ENCODE measurements at regions of chr1 and their contacts with region 1.

Region 1: DNA sequence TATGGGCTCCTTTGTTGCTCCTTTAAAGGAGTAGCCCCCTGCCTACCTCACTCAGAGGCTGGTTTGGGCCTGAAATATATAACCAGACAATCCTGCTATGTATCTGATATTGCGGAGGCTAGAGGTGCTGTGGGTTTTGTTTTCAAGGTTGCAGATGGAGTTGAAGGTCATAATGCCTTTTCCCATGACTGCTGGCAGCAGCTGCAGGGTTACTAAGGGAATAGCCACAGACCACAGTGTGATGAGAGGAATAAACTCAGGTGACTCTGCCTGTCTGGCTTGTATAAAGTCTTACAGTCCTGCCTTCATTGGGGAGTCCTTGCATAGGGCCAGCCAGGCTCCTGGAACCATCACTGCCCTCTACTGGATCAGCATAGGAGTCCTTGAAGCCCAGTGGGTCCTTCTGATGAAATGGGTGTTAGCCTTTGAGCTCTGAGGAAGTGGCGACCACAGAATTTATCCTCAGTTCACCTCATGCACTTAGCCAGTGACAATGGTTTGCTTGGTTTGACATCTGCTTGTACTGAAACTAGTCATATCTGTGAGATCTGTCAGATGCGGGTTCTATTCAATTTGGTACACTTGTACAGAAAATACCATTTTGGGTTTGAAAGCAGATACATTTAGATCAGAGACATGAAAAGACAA is 174.4 kb upstream of the HMCN1 start:
- DNase-seq: peak; percentile 92
- H3K4me3 Mint-ChIP-seq: peak overlapping the region; percentile 64
- H3K27ac Mint-ChIP-seq: peak overlapping the region; percentile 68
- H3K4me1 Mint-ChIP-seq: peaks cover 44% of the 10 kb centered on the region
- H3K27me3 Mint-ChIP-seq: no peaks in the 10 kb centered on the region

Region 2: GRCh38 chr1:184754476-184755225 is 805.2 kb before region 1 on chr1 and contains the start of gene EDEM3:
- intact Hi-C with region 1: loop called (anchors 10 kb)
- DNase-seq: peak; percentile 99
- H3K4me3 Mint-ChIP-seq: peak within 1 kb of the TSS; percentile 98
- H3K27ac Mint-ChIP-seq: peak within 1 kb of the TSS; percentile 96
- H3K4me1 Mint-ChIP-seq: peaks cover 23% of the 10 kb centered on the region
- H3K27me3 Mint-ChIP-seq: peaks cover 7% of the 10 kb centered on the region
- total RNA-seq, gene EDEM3: 23.6 and 28.3 TPM in 2 replicates

Region 3: GRCh38 chr1:185156854-185157598 is 402.8 kb before region 1 on chr1 and contains the starts of genes SWT1 and TRMT1L:
- intact Hi-C with region 1: loop called (anchors 2 kb)
- DNase-seq: peak; percentile 99
- H3K4me3 Mint-ChIP-seq: peak within 1 kb of the TSS; percentile 98
- H3K27ac Mint-ChIP-seq: peak within 1 kb of the TSS; percentile 98
- H3K4me1 Mint-ChIP-seq: peaks cover 55% of the 10 kb centered on the region
- H3K27me3 Mint-ChIP-seq: no peaks in the 10 kb centered on the region
- total RNA-seq, gene SWT1: 1.4 and 1.8 TPM in 2 replicates
- total RNA-seq, gene TRMT1L: 22.4 and 26.0 TPM in 2 replicates

Region 4: DNA sequence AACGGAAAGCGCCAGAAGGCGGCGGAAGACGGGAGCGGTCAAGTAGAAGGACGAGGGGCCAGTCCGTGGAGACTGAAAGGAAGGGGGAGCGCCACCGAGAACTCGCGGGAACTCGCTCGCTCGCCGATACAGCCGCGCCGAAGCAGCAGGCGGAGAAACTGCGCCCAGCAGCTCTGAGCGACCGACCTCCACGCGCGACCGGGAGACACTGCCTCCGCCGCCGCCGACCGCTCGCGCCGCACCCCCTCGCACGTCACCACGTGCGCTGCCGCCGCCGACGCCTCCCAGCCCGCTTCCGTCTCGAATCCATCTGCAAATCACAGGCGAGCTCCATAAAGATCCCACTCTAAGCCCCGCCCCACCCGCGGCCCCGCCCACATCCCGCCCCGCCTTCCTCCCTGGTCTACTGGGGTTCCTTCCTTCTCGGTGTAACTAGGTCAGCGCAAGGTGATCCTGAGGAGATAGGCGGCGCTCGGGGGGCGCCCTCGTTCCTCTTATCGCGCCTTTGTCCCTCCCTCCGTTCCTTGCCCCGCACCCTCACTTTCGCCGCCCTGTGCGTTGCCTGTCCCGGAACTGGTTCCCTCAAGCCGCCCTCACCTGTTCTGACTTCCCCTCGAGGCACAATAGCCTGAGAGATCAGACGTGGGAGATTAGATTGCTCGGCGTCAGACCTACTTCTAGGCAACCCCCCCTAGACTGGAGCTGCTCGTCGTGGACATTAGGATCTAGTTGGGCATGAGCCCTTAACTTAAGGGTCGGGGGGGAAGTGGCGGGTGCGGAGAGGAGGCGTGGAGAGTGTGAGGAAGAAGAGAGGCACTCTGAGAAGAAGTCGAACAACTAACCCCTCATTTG is 242.5 kb before region 1 on chr1 and contains the start of gene IVNS1ABP:
- intact Hi-C with region 1: loop called (anchors 1 kb)
- DNase-seq: peak; percentile 98
- H3K4me3 Mint-ChIP-seq: peak within 1 kb of the TSS; percentile 95
- H3K27ac Mint-ChIP-seq: peak within 1 kb of the TSS; percentile 95
- H3K4me1 Mint-ChIP-seq: peaks cover 39% of the 10 kb centered on the region
- H3K27me3 Mint-ChIP-seq: no peaks in the 10 kb centered on the region
- total RNA-seq, gene IVNS1ABP: 186 and 187 TPM in 2 replicates

Region 5: GRCh38 chr1:185420588-185421081 is 139.2 kb before region 1 on chr1:
- intact Hi-C with region 1: loop called (anchors 2 kb)
- DNase-seq: peak; percentile 86
- H3K4me3 Mint-ChIP-seq: peak overlapping the region; percentile 74
- H3K27ac Mint-ChIP-seq: peak overlapping the region; percentile 92
- H3K4me1 Mint-ChIP-seq: peaks cover 62% of the 10 kb centered on the region
- H3K27me3 Mint-ChIP-seq: no peaks in the 10 kb centered on the region

Region 6: GRCh38 chr1:185500001-185500626 is 59.7 kb before region 1 on chr1:
- intact Hi-C with region 1: loop called (anchors 2 kb)
- DNase-seq: no peak
- H3K4me3 Mint-ChIP-seq: no peak overlapping the region
- H3K27ac Mint-ChIP-seq: peak overlapping the region; percentile 73
- H3K4me1 Mint-ChIP-seq: peaks cover 22% of the 10 kb centered on the region
- H3K27me3 Mint-ChIP-seq: no peaks in the 10 kb centered on the region

Region 7: GRCh38 chr1:185681034-185681633 is 121.3 kb after region 1 on chr1:
- intact Hi-C with region 1: loop called (anchors 5 kb)
- DNase-seq: peak; percentile 80
- H3K4me3 Mint-ChIP-seq: no peak overlapping the region
- H3K27ac Mint-ChIP-seq: no peak overlapping the region
- H3K4me1 Mint-ChIP-seq: peaks cover 18% of the 10 kb centered on the region
- H3K27me3 Mint-ChIP-seq: peaks cover 3% of the 10 kb centered on the region

Measured in activated CD4-positive, alpha-beta T cell treated with anti-CD3 and anti-CD28 coated beads, Interleukin-2, amount 10 ng/mL, durations not matched to agents 24 days and 14 days (primary cell).